ENCODE measurements at regions of chr3 and their contacts with region 1.

Region 1: DNA sequence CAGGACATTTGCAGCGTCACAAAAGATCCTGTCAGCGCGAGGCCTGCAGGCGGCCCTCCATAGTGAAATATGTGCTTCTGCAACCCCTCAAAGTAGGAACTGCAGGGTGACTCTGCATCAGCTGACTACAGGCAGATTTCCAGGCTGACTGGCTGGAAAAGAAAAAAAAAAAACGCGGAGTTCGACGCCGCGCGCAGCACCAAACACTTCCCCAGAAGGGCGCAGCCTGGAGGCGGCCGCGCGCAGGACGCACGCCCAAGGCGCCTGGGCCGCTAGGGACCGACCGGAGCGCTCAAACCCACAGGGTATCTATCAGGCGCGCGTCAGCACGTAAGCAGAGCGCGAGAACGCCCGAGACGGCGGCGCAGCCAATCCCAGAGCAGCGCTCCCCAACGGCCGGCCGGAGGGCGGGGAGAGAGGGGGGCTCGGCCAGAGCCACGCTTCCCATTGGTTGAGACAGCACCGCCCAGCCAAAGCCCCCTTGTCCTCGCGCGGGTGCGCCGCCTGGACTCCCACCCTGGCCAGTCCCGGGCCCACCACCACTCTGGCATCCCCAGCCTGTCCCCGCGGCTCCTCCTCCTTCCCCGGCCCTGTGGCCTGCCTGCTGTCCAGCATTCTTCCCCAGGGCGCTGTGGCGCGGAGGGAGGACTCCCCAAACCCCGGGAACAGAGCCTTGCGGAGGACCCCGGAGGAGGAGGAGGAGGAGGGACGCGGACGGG is 1.0 kb downstream of the BDH1 start:
- DNase-seq: peak; percentile 98
- ATAC-seq: peak; percentile 97
- H3K4me3 Mint-ChIP-seq: peak overlapping the region; percentile 84
- H3K27ac Mint-ChIP-seq: peak overlapping the region; percentile 89
- H3K4me1 Mint-ChIP-seq: peaks cover 10% of the 10 kb centered on the region
- H3K27me3 Mint-ChIP-seq: peaks cover 13% of the 10 kb centered on the region

Region 2: DNA sequence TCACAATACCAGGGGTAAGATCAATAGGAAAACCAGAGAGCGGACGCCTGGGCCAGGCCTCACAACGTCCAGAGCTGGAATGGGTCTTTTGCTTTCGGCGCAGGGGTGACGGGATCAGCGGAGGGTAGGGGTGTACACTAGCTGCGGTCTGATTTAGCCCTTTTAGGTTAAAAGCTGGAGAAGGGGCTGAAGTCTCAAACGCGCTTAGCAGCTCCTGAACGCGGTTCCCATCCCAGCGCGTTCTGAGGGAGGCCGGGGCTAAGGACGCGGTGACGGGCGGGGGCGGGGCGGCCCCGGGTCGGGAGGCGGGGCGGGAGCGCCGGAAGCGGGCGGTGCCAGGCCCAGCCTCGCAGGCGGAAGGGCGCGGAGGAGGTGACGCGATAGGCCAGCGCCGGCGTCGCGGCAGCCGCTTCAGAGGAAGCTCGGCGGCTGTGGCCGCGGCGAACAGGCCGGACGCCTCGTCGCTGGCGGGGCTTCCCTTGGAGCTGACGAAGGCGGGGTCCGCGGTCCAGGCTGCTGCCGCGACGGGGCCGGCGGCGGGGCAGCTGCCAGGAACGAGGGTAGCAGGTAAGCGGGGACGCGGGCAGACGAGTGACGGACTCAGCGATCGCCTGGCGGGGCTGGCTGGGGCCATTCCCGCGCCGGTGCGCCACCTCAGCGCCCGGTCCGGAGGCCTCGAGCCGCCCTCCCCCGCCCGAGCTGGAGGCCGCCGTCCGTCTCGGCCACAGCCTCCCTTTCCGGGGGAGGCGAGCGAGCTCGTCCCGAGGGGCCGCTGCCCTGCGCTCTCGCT is 687.0 kb before region 1 on chr3 and contains the start of gene SENP5:
- CTCF ChIA-PET with region 1: no interaction called
- POLR2A ChIA-PET with region 1: no interaction called
- intact Hi-C with region 1: loop called in 1 of 2 experiments (anchors 1 kb)
- DNase-seq: peak; percentile 95
- ATAC-seq: peak; percentile 96
- H3K4me3 Mint-ChIP-seq: peak within 1 kb of the TSS; percentile 99
- H3K27ac Mint-ChIP-seq: peak within 1 kb of the TSS; percentile 95
- H3K4me1 Mint-ChIP-seq: peaks cover 24% of the 10 kb centered on the region
- H3K27me3 Mint-ChIP-seq: no peaks in the 10 kb centered on the region
- total RNA-seq, gene SENP5: 27.7 to 33.0 TPM

Region 3: GRCh38 chr3:197151569-197151968 is 403.2 kb before region 1 on chr3:
- CTCF ChIA-PET with region 1: no interaction called
- POLR2A ChIA-PET with region 1: no interaction called
- intact Hi-C with region 1: no loop called
- DNase-seq: no peak
- ATAC-seq: no peak
- H3K4me3 Mint-ChIP-seq: no peak overlapping the region
- H3K27ac Mint-ChIP-seq: no peak overlapping the region
- H3K4me1 Mint-ChIP-seq: peaks cover 2% of the 10 kb centered on the region
- H3K27me3 Mint-ChIP-seq: no peaks in the 10 kb centered on the region

Region 4: GRCh38 chr3:197298341-197298857 is 256.3 kb before region 1 on chr3 and contains the start of gene DLG1:
- CTCF ChIA-PET with region 1: no interaction called
- POLR2A ChIA-PET with region 1: no interaction called
- intact Hi-C with region 1: loop called in 1 of 2 experiments (anchors 1 kb)
- DNase-seq: peak; percentile 93
- ATAC-seq: peak; percentile 81
- H3K4me3 Mint-ChIP-seq: peak within 1 kb of the TSS; percentile 92
- H3K27ac Mint-ChIP-seq: peak within 1 kb of the TSS; percentile 93
- H3K4me1 Mint-ChIP-seq: peaks cover 23% of the 10 kb centered on the region
- H3K27me3 Mint-ChIP-seq: peaks cover 20% of the 10 kb centered on the region
- total RNA-seq, gene DLG1: 58.8 to 78.4 TPM

Region 5: GRCh38 chr3:197354319-197355001 is 200.3 kb before region 1 on chr3:
- CTCF ChIA-PET with region 1: no interaction called
- POLR2A ChIA-PET with region 1: no interaction called
- intact Hi-C with region 1: no loop called
- DNase-seq: no peak
- ATAC-seq: no peak
- H3K4me3 Mint-ChIP-seq: no peak overlapping the region
- H3K27ac Mint-ChIP-seq: no peak overlapping the region
- H3K4me1 Mint-ChIP-seq: no peaks in the 10 kb centered on the region
- H3K27me3 Mint-ChIP-seq: peaks cover 7% of the 10 kb centered on the region

Region 6: GRCh38 chr3:197406266-197406665 is 148.5 kb before region 1 on chr3:
- CTCF ChIA-PET with region 1: no interaction called
- POLR2A ChIA-PET with region 1: no interaction called
- intact Hi-C with region 1: no loop called
- DNase-seq: no peak
- ATAC-seq: no peak
- H3K4me3 Mint-ChIP-seq: no peak overlapping the region
- H3K27ac Mint-ChIP-seq: no peak overlapping the region
- H3K4me1 Mint-ChIP-seq: no peaks in the 10 kb centered on the region
- H3K27me3 Mint-ChIP-seq: peaks cover 16% of the 10 kb centered on the region

Region 7: DNA sequence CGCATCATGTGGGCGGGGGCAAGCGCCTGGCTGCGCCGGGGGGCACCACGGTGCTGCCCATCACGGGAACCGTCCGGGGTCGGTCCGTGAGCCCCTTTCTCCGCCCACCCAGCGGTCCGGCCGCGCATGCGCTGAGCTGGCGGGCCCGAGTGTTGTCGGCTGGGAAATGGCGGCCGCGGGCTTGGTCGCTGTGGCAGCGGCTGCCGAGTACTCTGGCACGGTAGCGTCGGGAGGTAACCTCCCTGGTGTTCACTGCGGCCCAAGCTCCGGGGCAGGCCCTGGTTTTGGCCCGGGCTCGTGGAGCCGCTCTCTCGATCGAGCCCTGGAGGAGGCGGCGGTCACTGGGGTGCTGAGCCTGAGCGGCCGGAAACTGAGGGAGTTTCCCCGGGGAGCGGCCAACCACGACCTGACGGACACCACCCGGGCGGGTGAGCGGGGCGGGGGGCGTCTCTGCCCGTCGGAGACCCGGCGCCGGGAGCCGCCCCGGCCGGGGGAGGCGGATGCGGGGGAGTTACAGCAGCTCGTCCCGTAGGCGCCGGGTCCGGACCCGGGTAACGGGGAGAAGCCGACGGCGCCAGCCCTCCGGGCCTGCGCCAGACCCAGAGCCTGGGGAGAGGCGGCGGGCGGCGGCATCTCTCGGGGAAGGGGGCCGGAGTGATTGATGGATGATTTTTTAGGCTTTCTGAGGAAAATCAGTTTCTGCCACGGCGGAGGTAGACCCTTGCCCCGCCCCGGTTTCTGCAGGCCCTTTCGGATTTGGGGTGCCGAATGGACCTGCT is 236.6 kb after region 1 on chr3 and contains the start of gene LRCH3:
- CTCF ChIA-PET with region 1: no interaction called
- POLR2A ChIA-PET with region 1: no interaction called
- intact Hi-C with region 1: loop called in 1 of 2 experiments (anchors 1 kb)
- DNase-seq: peak; percentile 88
- ATAC-seq: peak; percentile 70
- H3K4me3 Mint-ChIP-seq: peak within 1 kb of the TSS; percentile 97
- H3K27ac Mint-ChIP-seq: peak within 1 kb of the TSS; percentile 97
- H3K4me1 Mint-ChIP-seq: peaks cover 48% of the 10 kb centered on the region
- H3K27me3 Mint-ChIP-seq: no peaks in the 10 kb centered on the region
- total RNA-seq, gene LRCH3: 43.6 to 77.5 TPM

Region 8: DNA sequence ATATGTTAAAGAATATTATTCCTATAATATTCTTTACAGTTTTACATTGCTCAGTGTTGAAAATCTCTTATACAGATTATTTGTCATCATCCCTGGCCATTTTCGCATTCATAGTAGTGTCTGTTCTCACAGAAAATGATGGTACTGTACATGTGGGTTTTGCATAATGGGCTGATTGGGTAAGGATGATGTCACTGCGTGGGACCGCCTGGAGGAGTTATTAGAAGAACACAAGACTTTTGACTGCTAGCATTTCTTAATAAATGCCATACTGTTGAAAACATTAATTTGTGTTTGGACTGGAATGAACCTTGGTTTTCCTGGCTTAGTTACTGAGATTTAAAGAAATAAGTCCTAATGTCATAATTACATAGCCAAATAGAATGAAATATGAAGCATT is 256.6 kb after region 1 on chr3:
- CTCF ChIA-PET with region 1: no interaction called
- POLR2A ChIA-PET with region 1: no interaction called
- intact Hi-C with region 1: no loop called
- DNase-seq: no peak
- ATAC-seq: no peak
- H3K4me3 Mint-ChIP-seq: no peak overlapping the region
- H3K27ac Mint-ChIP-seq: no peak overlapping the region
- H3K4me1 Mint-ChIP-seq: peaks cover 33% of the 10 kb centered on the region
- H3K27me3 Mint-ChIP-seq: no peaks in the 10 kb centered on the region

Region 9: GRCh38 chr3:198080521-198081280 is 526.0 kb after region 1 on chr3:
- CTCF ChIA-PET with region 1: no interaction called
- POLR2A ChIA-PET with region 1: no interaction called
- intact Hi-C with region 1: loop called in 1 of 2 experiments (anchors 1 kb)
- DNase-seq: peak; percentile 90
- ATAC-seq: peak; percentile 80
- H3K4me3 Mint-ChIP-seq: peak overlapping the region; percentile 85
- H3K27ac Mint-ChIP-seq: peak overlapping the region; percentile 93
- H3K4me1 Mint-ChIP-seq: peaks cover 22% of the 10 kb centered on the region
- H3K27me3 Mint-ChIP-seq: peaks cover 40% of the 10 kb centered on the region